Heart left ventricle (tissue), 16 donors: ENCODE measurements at regions of chr1 and their contacts with region 1.

Region 1: GRCh38 chr1:19209990-19210771 is at the start of gene UBR4:
- DNase-seq: peak; percentile 94 to 97 (median 96)
- ATAC-seq: peak; percentile 98
- H3K4me3 ChIP-seq: peak within 1 kb of the TSS; percentile 69 to 95 (median 86)
- H3K27ac ChIP-seq: peak within 1 kb of the TSS; percentile 81 to 98 (median 94)
- H3K4me1 ChIP-seq: peaks cover 10 to 70% (median 55%) of the 10 kb centered on the region in 12 donors
- H3K27me3 ChIP-seq: no peaks in the 10 kb centered on the region
- CTCF ChIP-seq: peak in 2 of 12 donors; percentile 11 to 22
- POLR2A ChIP-seq: peak; percentile 68 to 92
- total RNA-seq, gene UBR4: 44.8 to 150 (median 94.4) TPM

Region 2: DNA sequence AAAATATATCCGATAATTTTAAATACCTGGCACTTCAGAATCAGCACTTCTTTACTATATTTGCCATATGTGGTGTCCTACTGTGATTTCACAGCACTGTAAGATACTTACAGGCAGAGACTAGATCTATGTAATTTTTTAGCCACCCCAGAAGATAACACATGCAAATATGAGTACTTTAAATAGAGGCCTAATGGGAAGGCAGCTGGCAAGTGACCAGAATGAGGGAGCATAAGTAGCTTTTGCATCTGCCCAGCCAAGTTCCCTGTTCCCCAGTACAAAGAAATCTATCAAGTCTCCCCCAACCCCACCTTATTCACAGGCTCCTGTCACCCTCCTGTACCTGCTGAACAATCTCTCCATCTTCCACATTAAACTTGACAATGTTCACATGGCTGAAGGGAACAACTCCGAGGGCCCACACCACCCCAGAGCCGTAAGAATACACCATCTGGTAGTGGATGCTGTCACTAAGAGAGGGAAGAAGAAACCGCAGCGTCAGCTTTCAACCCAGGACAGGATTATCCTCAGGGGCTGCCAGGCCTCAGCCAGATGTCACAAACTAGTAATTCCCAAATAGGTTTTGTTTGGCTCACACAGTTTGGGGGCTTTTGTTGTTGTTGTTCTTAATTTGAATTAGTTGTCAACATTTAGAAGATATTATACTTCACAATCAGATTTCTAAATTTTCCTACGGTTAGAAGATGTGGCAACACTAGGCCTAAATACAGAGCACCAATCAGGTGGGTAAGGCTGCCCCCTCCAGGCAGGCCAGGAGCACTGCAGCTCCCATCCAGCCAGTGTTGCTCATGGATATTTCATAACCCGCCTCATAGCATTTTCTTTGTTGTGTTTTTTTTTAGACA is 30.7 kb after region 1 on chr1:
- intact Hi-C with region 1: loop called in 1 of 10 experiments (anchors 5 kb)
- DNase-seq: peak in 4 of 5 donors; percentile 44 to 67 (median 58)
- ATAC-seq: peak; percentile 75 to 93 (median 92)
- H3K4me3 ChIP-seq: no peak overlapping the region
- H3K27ac ChIP-seq: no peak overlapping the region
- H3K4me1 ChIP-seq: peaks cover 0 to 6% (median 0%) of the 10 kb centered on the region in 12 donors
- H3K27me3 ChIP-seq: no peaks in the 10 kb centered on the region
- CTCF ChIP-seq: peak; percentile 85 to 99 (median 96)
- POLR2A ChIP-seq: no peak

Region 3: GRCh38 chr1:19251305-19252196 is 41.4 kb after region 1 on chr1 and contains the starts of genes EMC1 and MRTO4:
- intact Hi-C with region 1: loop called in 1 of 10 experiments (anchors 1 kb)
- DNase-seq: peak; percentile 84 to 92 (median 90)
- ATAC-seq: peak; percentile 87 to 97 (median 96)
- H3K4me3 ChIP-seq: peak within 1 kb of the TSS; percentile 63 to 95 (median 80)
- H3K27ac ChIP-seq: peak within 1 kb of the TSS; percentile 91 to 98 (median 96)
- H3K4me1 ChIP-seq: peaks cover 3 to 37% (median 25%) of the 10 kb centered on the region in 12 donors
- H3K27me3 ChIP-seq: no peaks in the 10 kb centered on the region
- CTCF ChIP-seq: no peak
- POLR2A ChIP-seq: peak in 1 of 2 donors; percentile 66
- total RNA-seq, gene EMC1: 23.4 to 54.5 (median 32.7) TPM
- total RNA-seq, gene MRTO4: 8.3 to 17.4 (median 13.7) TPM

Region 4: DNA sequence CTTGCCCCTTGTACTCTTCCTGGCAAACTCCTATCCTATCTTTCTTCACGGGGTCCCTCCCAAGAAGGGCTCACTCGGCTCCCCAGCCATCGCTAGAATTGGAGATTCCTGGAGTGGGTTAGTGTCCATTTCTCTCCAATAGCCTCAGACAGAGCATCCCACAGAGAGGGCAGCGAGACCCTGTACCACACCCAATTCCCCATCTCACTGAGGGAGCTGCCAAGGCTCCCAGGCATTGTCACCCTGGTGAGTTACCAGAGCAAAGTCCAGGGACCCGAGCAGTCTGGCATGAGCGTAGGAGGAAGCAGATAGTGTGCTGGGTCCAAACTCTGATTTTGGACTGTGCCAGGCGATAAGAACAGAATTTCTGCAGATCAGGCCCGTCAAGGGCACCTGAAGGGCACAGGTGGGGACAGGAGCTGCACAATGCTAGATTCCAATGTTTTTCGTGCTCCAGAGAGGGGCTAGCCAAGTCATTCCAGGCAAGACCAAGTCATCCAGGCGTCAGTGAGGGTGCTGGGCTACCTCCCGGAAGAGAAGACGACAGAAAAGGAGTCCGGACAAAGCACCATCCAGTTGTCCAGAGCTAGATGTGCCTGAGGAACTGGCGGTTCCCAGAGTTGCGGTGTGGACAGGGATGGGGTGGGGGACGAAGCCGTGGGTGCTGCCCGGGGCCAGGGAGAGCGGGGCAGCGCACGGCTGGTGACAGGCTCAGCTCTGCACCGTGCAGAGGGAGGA is 63.1 kb after region 1 on chr1:
- intact Hi-C with region 1: no loop called
- DNase-seq: no peak
- ATAC-seq: peak in 2 of 4 donors; percentile 14 to 17
- H3K4me3 ChIP-seq: peak overlapping the region in 2 of 12 donors; percentile 12 to 16
- H3K27ac ChIP-seq: no peak overlapping the region
- H3K4me1 ChIP-seq: peaks cover 0 to 5% (median 0%) of the 10 kb centered on the region in 12 donors
- H3K27me3 ChIP-seq: peaks cover 0 to 13% (median 0%) of the 10 kb centered on the region in 9 donors
- CTCF ChIP-seq: no peak
- POLR2A ChIP-seq: no peak

Region 5: DNA sequence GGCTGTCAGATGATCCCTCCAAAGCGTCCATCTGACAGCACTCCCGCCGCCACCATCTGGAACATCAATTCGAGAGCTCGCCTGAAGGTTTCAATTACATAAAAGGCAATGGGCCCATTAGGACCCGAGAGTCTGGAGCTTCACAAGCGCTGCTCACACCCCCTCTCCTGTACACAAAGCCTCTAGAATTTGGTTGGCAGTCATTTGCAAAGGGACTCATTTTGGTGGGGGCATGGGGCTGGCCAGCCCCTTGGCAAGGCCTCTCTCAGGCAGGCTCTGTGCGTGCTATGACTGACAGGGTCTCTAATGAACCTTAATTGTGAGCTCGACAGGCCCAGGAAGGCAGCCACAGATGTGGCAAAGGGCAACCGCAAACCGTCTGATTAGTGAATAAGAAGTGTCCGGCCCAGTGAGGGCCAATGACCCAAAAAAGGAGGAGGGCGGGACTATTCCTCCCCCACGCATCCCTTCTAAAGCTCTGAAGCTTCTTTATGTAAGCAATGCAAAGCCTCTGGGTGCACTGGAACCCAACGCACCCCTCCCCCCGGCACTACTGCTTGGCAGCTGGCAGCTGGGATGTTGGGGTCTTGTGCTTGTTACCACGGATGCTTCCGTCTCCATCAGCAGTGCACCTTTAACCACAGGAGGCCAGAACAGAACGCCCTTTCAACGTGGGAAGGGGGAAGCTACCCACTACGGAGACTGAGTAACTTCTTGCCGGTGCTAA is 195.7 kb after region 1 on chr1:
- intact Hi-C with region 1: no loop called
- DNase-seq: peak in 1 of 5 donors; percentile 37
- ATAC-seq: peak in 2 of 4 donors; percentile 18 to 27
- H3K4me3 ChIP-seq: no peak overlapping the region
- H3K27ac ChIP-seq: peak overlapping the region in 8 of 12 donors; percentile 5 to 83 (median 51)
- H3K4me1 ChIP-seq: peaks cover 2 to 84% (median 58%) of the 10 kb centered on the region in 12 donors
- H3K27me3 ChIP-seq: no peaks in the 10 kb centered on the region
- CTCF ChIP-seq: no peak
- POLR2A ChIP-seq: no peak